Mammary epithelial cell (primary cell): ENCODE measurements at regions of chr7 and their contacts with region 1.

Region 1: DNA sequence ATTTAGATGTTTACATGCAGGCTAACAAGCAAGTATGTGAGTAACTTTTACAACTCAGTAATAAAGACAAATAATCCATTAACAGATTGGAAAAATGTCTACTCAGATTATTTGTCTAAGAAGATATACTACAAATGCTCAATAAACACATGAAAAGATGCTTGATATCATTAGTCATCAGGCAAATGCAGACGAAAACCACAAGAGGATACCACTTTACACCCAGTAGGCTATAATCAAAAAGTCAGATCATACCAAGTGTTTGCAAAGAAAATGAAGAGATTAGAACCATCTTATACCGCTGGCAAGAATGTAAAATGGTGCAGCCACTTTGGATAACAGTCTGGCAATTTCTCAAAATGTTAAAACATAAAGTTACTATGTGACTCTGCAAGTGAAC is 84.1 kb downstream of the MALSU1 start:
- DNase-seq: peak; percentile 11
- H3K4me3 ChIP-seq: no peak overlapping the region
- H3K27ac ChIP-seq: no peak overlapping the region
- H3K4me1 ChIP-seq: no peaks in the 10 kb centered on the region
- H3K27me3 ChIP-seq: no peaks in the 10 kb centered on the region
- CTCF ChIP-seq: no peak

Region 2: GRCh38 chr7:23120106-23120505 is 263.1 kb before region 1 on chr7:
- CTCF ChIA-PET with region 1: no interaction called
- dilution Hi-C with region 1: no loop called
- in situ Hi-C with region 1: no loop called
- intact Hi-C with region 1: no loop called
- DNase-seq: no peak
- H3K4me3 ChIP-seq: no peak overlapping the region
- H3K27ac ChIP-seq: no peak overlapping the region
- H3K4me1 ChIP-seq: no peaks in the 10 kb centered on the region
- H3K27me3 ChIP-seq: no peaks in the 10 kb centered on the region
- CTCF ChIP-seq: no peak

Region 3: DNA sequence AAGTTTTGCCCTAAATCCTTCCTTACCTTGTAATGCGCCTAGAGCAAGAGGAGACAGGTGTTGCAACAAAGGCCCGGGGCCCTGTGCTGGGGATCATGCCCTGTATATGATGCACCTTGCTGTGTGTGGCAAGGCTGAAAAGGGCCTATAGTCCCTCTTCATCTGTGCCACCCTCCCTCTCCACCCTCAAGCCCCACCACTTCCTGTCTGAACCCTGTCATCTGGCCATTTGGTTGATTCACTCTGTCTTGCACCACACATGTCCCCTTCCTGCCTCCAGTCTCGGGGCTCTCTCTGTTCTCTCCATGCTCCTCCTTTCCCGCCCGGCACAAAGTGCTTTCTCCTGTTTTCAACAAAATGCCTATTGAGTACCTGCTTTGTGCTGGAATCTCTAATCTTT is 95.6 kb before region 1 on chr7:
- CTCF ChIA-PET with region 1: no interaction called
- dilution Hi-C with region 1: loop called (anchors 5 kb)
- in situ Hi-C with region 1: no loop called
- intact Hi-C with region 1: no loop called
- DNase-seq: no peak
- H3K4me3 ChIP-seq: no peak overlapping the region
- H3K27ac ChIP-seq: no peak overlapping the region
- H3K4me1 ChIP-seq: no peaks in the 10 kb centered on the region
- H3K27me3 ChIP-seq: no peaks in the 10 kb centered on the region
- CTCF ChIP-seq: no peak